ENCODE measurements at regions of chr3 and their contacts with region 1.

Region 1: DNA sequence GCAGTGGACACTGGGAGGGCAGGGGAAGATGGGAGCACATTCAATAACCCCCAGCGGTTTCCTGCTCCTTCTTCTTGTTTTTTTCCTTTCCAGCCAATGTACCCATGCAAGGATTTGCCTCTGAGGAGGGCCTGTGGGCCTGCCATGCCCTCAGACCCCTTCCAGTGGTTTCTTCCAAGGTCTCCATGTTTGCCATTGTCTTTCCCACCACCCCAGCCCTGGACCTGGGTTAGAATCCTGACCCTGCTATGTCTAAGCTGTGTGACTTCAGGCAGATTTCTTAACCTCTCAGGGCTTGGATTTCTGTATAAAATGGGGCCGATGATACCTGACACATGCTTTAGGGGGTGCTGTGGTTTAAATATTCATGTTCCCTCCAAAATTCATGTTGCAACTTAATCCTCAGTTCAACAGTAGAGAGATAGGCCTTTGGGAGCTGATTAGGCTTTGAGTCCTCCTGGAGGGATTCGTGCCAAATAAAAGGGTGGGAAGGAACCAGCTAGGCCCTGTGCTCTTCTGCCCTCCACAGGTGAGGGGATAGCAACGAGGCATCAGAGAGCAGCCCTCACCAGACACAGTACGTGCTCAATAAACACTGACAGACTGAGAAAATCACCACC is 46.3 kb upstream of the FLNB start:
- DNase-seq: no peak
- H3K4me3 ChIP-seq: no peak overlapping the region
- CTCF ChIP-seq: peak; percentile 20

Region 2: DNA sequence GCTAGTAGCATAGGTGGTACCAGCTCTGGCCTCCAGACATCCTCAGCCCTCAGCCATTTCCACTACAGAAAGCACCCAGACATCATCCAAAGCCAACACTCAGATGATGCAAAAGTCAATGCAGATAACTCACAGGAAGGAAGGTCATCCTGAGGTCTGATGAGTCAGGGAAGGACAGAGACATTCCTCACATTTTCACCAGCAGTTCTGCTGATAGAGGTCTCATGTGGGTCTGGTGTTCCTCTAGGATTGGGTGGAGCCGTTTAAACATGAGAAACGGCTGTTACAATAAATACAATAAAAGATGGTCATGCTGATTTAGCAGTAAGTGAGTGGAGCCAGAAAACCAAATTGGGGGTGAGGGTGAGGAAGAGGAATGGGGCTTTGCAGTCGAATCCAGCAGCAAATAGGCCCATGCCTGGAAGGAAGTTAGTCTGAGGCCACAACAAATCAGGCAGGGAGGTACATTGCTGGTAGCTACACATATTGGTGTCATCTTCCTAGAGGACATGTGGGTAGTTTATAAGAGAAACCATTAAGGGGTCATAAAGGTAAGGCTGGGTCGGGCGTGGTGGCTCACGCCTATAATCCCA is 13.0 kb after region 1 on chr3:
- CTCF ChIA-PET with region 1: interaction called, 14 read pairs
- POLR2A ChIA-PET with region 1: no interaction called
- DNase-seq: peak; percentile 87
- H3K4me3 ChIP-seq: no peak overlapping the region
- CTCF ChIP-seq: no peak